ENCODE measurements at regions of chr1 and their contacts with region 1.

Region 1: DNA sequence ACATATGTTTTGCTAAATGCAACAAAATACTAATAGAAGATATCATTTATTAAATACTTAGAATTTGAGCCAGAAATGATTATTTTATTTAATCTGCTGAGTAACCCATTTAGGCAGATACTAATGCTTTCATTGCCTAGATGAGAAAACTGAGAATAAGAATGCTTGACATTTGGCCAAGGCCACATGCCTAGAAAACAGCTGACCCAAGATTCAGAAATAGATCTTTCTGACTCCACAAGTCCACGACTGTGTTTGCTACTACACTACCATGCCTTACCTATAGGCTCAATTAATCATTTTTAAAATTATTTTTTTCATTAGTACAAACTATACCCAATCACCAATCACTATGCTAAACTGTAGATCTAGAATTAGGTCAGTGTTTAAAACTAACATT is 129.7 kb downstream of the ATP1B1 start:
- DNase-seq: no peak
- H3K4me3 ChIP-seq: no peak overlapping the region
- H3K27ac ChIP-seq: no peak overlapping the region
- H3K4me1 ChIP-seq: peaks cover 7% of the 10 kb centered on the region
- H3K27me3 ChIP-seq: no peaks in the 10 kb centered on the region
- CTCF ChIP-seq: no peak

Region 2: GRCh38 chr1:169138866-169139670 is 97.1 kb before region 1 on chr1:
- CTCF ChIA-PET with region 1: no interaction called
- dilution Hi-C with region 1: no loop called
- in situ Hi-C with region 1: no loop called
- intact Hi-C with region 1: no loop called
- DNase-seq: peak; percentile 38
- H3K4me3 ChIP-seq: no peak overlapping the region
- H3K27ac ChIP-seq: no peak overlapping the region
- H3K4me1 ChIP-seq: peaks cover under 1% of the 10 kb centered on the region
- H3K27me3 ChIP-seq: no peaks in the 10 kb centered on the region
- CTCF ChIP-seq: no peak

Region 3: DNA sequence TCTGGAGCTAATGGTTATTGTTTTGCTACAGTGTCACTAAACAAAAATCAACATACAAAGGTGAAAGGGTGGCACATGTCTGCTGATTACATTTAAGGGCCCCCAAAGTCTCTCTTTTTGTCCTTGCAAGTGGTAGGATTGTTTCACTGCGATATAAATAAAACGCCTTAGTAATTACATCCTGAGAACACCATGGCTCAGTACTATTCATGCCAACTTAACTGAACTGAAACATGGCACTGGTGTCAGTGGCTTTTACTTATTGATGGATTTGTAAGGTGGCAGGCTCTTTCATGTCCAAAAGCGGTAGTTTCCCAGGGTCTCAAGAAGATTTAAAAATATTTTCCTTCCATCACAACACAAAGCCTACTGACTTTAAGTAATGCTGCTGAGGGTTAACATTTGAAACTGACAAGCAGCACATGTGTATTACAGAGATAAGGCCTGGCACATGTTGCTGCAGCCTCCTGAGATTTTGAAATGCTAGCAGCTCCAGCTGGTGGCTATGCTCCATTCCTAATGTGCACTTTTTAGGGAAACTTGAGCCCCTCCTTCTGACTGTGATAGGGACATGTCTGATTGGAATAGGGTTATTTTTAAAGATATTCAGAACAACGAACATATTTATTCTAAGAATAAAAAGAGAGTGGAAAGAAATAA is 42.8 kb before region 1 on chr1:
- CTCF ChIA-PET with region 1: no interaction called
- dilution Hi-C with region 1: no loop called
- in situ Hi-C with region 1: no loop called
- intact Hi-C with region 1: no loop called
- DNase-seq: no peak
- H3K4me3 ChIP-seq: no peak overlapping the region
- H3K27ac ChIP-seq: no peak overlapping the region
- H3K4me1 ChIP-seq: no peaks in the 10 kb centered on the region
- H3K27me3 ChIP-seq: no peaks in the 10 kb centered on the region
- CTCF ChIP-seq: no peak

Region 4: GRCh38 chr1:169288011-169288414 is 51.9 kb after region 1 on chr1:
- CTCF ChIA-PET with region 1: no interaction called
- dilution Hi-C with region 1: loop called (anchors 5 kb)
- in situ Hi-C with region 1: no loop called
- intact Hi-C with region 1: no loop called
- DNase-seq: peak; percentile 42
- H3K4me3 ChIP-seq: no peak overlapping the region
- H3K27ac ChIP-seq: no peak overlapping the region
- H3K4me1 ChIP-seq: peaks cover 27% of the 10 kb centered on the region
- H3K27me3 ChIP-seq: no peaks in the 10 kb centered on the region
- CTCF ChIP-seq: no peak

Region 5: GRCh38 chr1:169670836-169671235 is 434.7 kb after region 1 on chr1:
- CTCF ChIA-PET with region 1: no interaction called
- dilution Hi-C with region 1: no loop called
- in situ Hi-C with region 1: no loop called
- intact Hi-C with region 1: no loop called
- DNase-seq: no peak
- H3K4me3 ChIP-seq: no peak overlapping the region
- H3K27ac ChIP-seq: no peak overlapping the region
- H3K4me1 ChIP-seq: no peaks in the 10 kb centered on the region
- H3K27me3 ChIP-seq: no peaks in the 10 kb centered on the region
- CTCF ChIP-seq: no peak

Measured in mammary epithelial cell (primary cell).